Calu3 (cell line): ENCODE measurements at regions of chr3 and their contacts with region 1.

Region 1: GRCh38 chr3:197186887-197187588 is 111.4 kb downstream of the DLG1 start:
- DNase-seq: peak; percentile 17
- H3K4me3 Mint-ChIP-seq: no peak overlapping the region
- H3K27ac Mint-ChIP-seq: no peak overlapping the region
- H3K4me1 Mint-ChIP-seq: peaks cover 31% of the 10 kb centered on the region
- H3K27me3 Mint-ChIP-seq: no peaks in the 10 kb centered on the region
- CTCF ChIP-seq: peak; percentile 54

Region 2: GRCh38 chr3:196969660-196970546 is 217.1 kb before region 1 on chr3:
- CTCF ChIA-PET with region 1: no interaction called
- intact Hi-C with region 1: loop called (anchors 10 kb)
- DNase-seq: peak; percentile 83
- H3K4me3 Mint-ChIP-seq: peak overlapping the region; percentile 80
- H3K27ac Mint-ChIP-seq: peak overlapping the region; percentile 27
- H3K4me1 Mint-ChIP-seq: peaks cover 10% of the 10 kb centered on the region
- H3K27me3 Mint-ChIP-seq: peaks cover 16% of the 10 kb centered on the region
- CTCF ChIP-seq: peak; percentile 85

Region 3: DNA sequence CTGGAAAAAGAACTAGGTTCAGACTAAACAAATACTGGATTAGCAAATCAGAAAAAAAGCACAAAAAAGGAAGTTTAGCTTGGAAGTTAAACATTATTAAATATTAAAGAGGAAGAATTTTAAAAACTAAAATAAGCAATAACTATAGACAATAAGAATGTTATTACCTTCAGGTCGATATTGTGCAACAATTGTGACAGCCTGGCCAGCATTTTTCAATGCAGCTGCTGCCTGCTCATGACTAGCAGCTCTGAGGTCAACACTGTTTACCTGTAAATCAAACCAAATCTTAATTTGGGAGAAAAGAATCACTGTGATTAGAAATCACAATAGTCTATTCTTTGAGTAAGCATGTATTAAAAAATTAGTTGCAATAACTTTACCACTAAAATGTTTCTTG is 82.3 kb before region 1 on chr3:
- CTCF ChIA-PET with region 1: no interaction called
- intact Hi-C with region 1: no loop called
- DNase-seq: no peak
- H3K4me3 Mint-ChIP-seq: no peak overlapping the region
- H3K27ac Mint-ChIP-seq: no peak overlapping the region
- H3K4me1 Mint-ChIP-seq: no peaks in the 10 kb centered on the region
- H3K27me3 Mint-ChIP-seq: no peaks in the 10 kb centered on the region
- CTCF ChIP-seq: no peak